CD8-positive, alpha-beta T cell (primary cell): ENCODE measurements at regions of chr22 and their contacts with region 1.

Region 1: DNA sequence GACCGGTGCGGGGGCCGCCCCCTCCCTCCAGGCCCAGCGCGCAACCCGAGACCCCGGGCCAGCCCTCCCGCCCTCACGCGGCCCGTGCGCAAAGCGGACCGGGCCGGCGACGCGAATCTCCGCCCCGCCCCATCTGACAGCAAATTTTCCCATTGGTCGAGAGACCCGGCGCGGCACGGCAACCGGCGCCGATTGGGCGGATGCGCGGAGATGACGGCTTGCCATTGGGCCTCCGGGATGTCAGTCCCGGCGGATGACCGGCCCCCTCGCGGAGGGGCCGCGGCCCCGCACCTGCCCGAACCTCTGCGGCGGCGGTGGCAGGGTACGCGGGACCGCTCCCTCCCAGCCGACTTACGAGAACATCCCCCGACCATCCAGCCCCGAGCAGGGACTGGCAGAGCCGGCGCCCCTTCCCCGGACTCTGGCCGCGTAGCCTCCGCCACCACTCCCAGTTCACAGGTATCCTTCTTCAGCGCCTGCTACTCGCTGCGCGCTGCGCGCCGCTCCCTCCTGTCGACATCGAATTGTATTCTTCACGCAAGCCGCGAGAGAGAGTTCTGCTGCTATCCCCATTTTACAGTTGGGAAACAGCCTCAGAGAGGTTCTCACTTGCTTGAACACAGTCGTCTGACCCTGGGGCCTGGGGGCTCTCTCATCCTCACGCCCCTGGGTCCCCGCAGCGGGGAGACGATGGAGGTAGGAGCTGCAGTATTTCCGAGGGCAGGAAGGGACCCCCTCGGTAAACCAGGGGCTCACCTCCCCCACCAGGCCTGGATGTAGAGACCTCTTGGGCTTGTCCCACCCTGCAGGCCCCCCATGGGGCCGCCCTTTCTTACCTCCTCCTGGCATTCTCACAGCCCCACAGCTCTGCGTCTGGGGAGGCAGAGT is at the start of gene ARVCF:
- DNase-seq: peak; percentile 85 to 96 (median 92)
- ATAC-seq: peak; percentile 66
- H3K4me3 ChIP-seq: peak within 1 kb of the TSS; percentile 79 to 81
- H3K4me3 Mint-ChIP-seq: peak within 1 kb of the TSS; percentile 91
- H3K27ac ChIP-seq: no peak within 1 kb of the TSS
- H3K27ac Mint-ChIP-seq: peak within 1 kb of the TSS; percentile 14
- H3K4me1 ChIP-seq: peaks cover 19% of the 10 kb centered on the region
- H3K4me1 Mint-ChIP-seq: peaks cover 25% of the 10 kb centered on the region
- H3K27me3 ChIP-seq: no peaks in the 10 kb centered on the region
- H3K27me3 Mint-ChIP-seq: no peaks in the 10 kb centered on the region
- CTCF ChIP-seq: no peak
- total RNA-seq, gene ARVCF: 1.1 to 2.3 TPM

Region 2: DNA sequence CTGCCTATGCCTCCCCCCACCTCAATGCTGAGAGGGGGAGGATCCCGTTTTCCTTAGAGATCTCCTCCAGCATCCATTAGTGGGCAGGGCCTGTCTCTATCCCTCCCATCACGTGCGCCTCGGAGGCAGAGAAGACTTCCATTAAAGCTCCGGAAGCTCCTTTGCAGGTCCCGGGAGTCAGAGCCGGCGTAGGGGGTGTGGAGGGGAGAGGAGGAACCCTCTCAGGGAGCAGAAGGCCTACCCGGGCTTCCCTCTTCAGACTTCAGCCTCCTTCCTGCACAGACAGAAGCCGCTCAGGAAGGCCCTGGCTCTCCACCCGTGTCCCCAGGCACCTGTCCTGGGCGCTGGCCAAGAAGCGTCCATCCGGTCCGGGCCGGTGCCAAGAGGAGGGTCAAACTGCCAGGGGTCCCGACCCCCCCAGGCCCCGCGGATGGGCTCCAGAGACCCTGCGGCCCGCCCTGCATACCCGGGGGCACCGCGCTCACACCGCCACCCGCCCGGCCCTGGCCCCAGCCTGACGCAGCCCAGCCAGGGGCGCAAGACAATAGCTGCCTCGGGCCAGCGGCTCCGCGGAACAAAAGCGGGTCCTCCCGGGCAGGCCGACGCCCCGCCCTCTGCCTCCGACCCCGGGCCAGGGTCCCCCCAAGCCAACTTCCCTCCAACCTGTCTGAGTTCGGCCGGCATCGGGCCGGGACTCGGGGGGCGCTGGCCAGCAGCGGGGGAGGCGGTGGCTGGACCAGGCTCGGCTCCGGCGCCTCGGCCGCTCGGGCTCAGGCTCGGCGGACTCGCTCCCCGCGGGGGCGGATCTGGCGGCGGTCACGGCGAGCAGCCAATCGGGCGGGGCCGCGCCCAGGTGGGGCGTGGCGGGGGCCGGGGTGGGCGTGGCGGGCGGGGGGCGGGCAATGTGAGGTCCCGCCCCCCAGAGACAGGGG is 30.3 kb before region 1 on chr22:
- CTCF ChIA-PET with region 1: interaction called, 3 read pairs
- POLR2A ChIA-PET with region 1: no interaction called
- intact Hi-C with region 1: loop called (anchors 2 kb)
- DNase-seq: peak; percentile 21 to 79 (median 62)
- ATAC-seq: peak; percentile 93
- H3K4me3 ChIP-seq: peak overlapping the region; percentile 46 to 66
- H3K4me3 Mint-ChIP-seq: peak overlapping the region; percentile 66
- H3K27ac ChIP-seq: no peak overlapping the region
- H3K27ac Mint-ChIP-seq: no peak overlapping the region
- H3K4me1 ChIP-seq: peaks cover 8% of the 10 kb centered on the region
- H3K4me1 Mint-ChIP-seq: peaks cover 3% of the 10 kb centered on the region
- H3K27me3 ChIP-seq: no peaks in the 10 kb centered on the region
- H3K27me3 Mint-ChIP-seq: no peaks in the 10 kb centered on the region
- CTCF ChIP-seq: no peak